Sciatic nerve (tissue), 2 donors: ENCODE measurements at regions of chr7 and their contacts with region 1.

Region 1: DNA sequence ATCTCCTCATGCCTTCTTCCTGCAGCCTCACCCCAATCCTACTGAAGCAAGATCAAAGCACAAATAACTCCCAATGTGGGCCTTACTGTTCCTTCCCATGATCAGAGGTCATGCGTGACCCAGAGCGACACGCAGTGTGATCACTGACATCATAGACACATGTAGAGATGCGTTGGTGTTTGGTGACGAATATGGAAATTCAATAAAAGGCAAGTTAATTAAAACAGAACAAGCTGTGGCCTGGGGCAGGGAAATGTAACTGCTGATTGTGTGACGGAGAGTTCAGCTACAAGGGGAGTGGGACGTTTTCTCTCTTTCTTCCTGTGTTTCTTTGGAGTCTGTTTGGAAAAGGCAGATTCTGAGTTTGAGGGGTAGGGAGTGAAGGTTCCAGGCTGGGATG is 34.8 kb upstream of the CARD11 start:
- DNase-seq: no peak
- ATAC-seq: no peak

Region 2: GRCh38 chr7:2796358-2797352 is 281.9 kb before region 1 on chr7:
- intact Hi-C with region 1: no loop called
- DNase-seq: peak; percentile 78
- ATAC-seq: peak; percentile 92

Region 3: DNA sequence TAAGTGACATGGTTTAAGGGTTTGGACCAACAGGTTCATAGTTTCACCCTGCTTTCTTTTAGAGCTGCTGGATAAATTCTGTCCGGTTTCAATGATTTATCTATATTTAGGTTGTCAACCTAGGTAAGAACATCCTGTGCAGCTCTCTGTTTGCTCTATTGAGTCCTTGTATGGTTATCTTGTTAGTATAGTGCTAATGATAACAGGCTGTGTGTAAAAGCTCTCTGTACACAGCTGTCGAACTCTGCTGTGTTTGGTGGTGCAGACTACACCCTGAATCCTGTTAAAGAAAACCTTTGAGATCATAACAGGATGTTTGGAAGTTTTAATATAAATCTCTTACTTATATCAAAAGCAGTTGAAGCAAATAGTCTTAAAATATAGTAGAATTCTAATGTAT is 441.7 kb after region 1 on chr7:
- intact Hi-C with region 1: loop called (anchors 5 kb)
- DNase-seq: no peak
- ATAC-seq: no peak